ENCODE measurements at regions of chr1 and their contacts with region 1.

Region 1: DNA sequence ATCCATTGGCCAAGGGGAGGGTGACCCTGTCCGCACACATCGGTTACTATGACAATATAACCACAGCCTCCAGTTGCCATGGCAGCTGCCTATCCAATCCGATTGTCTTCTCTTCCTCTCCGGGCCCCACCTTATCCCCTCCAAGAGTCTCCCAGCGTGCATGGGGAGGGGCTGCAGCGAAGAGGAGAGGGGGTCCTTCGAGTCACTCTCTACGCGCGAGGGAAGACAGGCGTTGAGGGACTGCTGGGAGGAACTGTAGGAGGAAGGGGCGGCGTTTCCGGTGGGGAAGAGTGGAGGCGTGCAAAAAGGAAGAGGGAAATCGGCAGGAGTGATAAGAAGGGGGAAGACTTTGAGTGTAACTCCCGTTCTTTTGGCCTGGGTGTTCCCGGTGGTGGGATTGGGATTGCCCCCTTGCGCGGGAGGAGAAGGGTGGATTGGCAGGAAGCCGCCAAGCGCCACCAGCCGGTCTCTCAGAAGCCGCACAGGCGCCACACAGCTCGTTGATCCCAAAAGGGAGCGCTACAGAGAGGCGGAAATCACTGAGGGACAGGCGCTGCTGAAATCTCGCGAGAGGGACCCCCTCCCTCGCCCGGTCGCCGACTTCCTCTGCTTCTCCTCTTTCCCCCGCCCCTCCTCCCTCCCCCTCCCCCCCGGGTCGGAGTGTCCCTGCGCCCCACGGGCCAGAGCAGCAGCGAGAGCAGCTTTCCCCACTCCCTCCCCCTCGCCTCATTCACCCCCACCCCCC is 384 bp upstream of the SMG7 start:
- DNase-seq: peak; percentile 96 to 99 (median 97)
- H3K4me3 ChIP-seq: peak overlapping the region; percentile 82 to 98
- H3K4me3 Mint-ChIP-seq: peak overlapping the region; percentile 90 to 99 (median 96)
- H3K27ac ChIP-seq: peak overlapping the region; percentile 91
- H3K27ac Mint-ChIP-seq: peak overlapping the region; percentile 99 to 100 (median 100)
- H3K4me1 ChIP-seq: peaks cover 39% of the 10 kb centered on the region
- H3K4me1 Mint-ChIP-seq: peaks cover 13 to 43% (median 19%) of the 10 kb centered on the region in 4 donors
- H3K27me3 ChIP-seq: no peaks in the 10 kb centered on the region
- H3K27me3 Mint-ChIP-seq: peaks cover 0 to 3% of the 10 kb centered on the region in 2 donors

Region 2: GRCh38 chr1:182839209-182840065 is 632.5 kb before region 1 on chr1 and contains the start of gene DHX9:
- CTCF ChIA-PET with region 1: no interaction called
- POLR2A ChIA-PET with region 1: no interaction called
- intact Hi-C with region 1: loop called (anchors 2 kb)
- DNase-seq: peak; percentile 95 to 99 (median 96)
- H3K4me3 ChIP-seq: peak within 1 kb of the TSS; percentile 44 to 69
- H3K4me3 Mint-ChIP-seq: peak within 1 kb of the TSS; percentile 88 to 99 (median 96)
- H3K27ac ChIP-seq: peak within 1 kb of the TSS; percentile 81
- H3K27ac Mint-ChIP-seq: peak within 1 kb of the TSS; percentile 89 to 100 (median 98)
- H3K4me1 ChIP-seq: peaks cover 38% of the 10 kb centered on the region
- H3K4me1 Mint-ChIP-seq: peaks cover 34 to 57% (median 42%) of the 10 kb centered on the region in 4 donors
- H3K27me3 ChIP-seq: no peaks in the 10 kb centered on the region
- H3K27me3 Mint-ChIP-seq: no peaks in the 10 kb centered on the region
- total RNA-seq, gene DHX9: 222 TPM

Region 3: DNA sequence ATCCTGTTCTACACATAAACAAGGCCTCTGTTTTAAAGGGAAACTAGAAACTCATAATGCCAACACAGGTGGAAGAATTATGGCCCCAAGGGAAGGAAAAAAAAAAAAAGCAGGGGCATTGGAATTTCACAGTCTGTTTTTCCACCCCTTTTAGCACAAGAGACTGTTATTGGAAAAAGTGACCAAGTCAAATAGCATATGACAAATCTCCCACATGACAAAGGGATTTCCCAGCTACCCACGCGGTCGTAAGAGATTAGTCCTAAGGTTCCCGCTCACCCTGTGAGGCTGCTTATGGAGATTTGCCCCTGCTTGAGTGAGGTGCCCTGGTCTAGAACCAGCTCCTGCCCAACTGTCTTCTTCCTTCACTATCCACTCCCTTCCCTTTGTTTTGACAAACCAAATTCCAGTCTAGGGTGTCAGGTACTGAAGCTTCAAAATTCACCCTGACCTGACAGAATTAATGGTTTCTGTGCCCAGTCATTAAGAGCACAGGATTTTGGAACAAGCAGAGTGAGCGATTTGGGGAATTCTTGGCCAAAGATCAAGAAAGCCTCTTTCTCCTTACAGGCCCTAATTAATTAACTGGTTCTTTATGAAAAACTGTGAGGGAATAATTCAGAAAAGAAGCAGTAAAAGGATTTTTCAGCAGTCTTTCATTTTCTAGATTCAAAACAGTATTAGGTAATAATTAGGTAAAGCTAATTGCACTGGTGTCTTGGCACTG is 161.0 kb before region 1 on chr1:
- CTCF ChIA-PET with region 1: no interaction called
- POLR2A ChIA-PET with region 1: no interaction called
- intact Hi-C with region 1: no loop called
- DNase-seq: no peak
- H3K4me3 ChIP-seq: no peak overlapping the region
- H3K4me3 Mint-ChIP-seq: no peak overlapping the region
- H3K27ac ChIP-seq: no peak overlapping the region
- H3K27ac Mint-ChIP-seq: no peak overlapping the region
- H3K4me1 ChIP-seq: no peaks in the 10 kb centered on the region
- H3K4me1 Mint-ChIP-seq: no peaks in the 10 kb centered on the region
- H3K27me3 ChIP-seq: no peaks in the 10 kb centered on the region
- H3K27me3 Mint-ChIP-seq: peaks cover 3% of the 10 kb centered on the region in 2 donors

Region 4: DNA sequence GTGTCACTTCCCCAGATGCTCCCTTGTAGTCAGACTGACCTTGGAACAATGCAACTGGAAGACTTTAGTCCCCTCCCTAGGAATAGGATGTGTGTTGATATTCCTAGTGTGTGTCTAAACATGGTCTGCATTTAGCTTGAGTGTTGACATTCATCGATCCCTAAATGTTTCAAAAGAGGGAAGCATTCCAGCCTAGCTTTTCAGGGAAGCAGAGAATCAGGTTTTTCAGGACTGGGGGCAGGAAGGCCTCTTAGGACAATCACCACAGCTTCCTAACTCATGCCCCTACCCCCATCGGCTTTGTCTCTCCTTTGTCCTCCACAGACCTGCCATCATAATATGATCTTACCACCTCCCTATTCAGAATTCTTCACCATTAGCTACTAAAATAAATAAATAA is 97.1 kb before region 1 on chr1:
- CTCF ChIA-PET with region 1: no interaction called
- POLR2A ChIA-PET with region 1: no interaction called
- intact Hi-C with region 1: no loop called
- DNase-seq: no peak
- H3K4me3 ChIP-seq: no peak overlapping the region
- H3K4me3 Mint-ChIP-seq: no peak overlapping the region
- H3K27ac ChIP-seq: no peak overlapping the region
- H3K27ac Mint-ChIP-seq: no peak overlapping the region
- H3K4me1 ChIP-seq: no peaks in the 10 kb centered on the region
- H3K4me1 Mint-ChIP-seq: no peaks in the 10 kb centered on the region
- H3K27me3 ChIP-seq: no peaks in the 10 kb centered on the region
- H3K27me3 Mint-ChIP-seq: peaks cover 9 to 10% of the 10 kb centered on the region in 2 donors

Region 5: GRCh38 chr1:183543619-183544204 is 71.8 kb after region 1 on chr1:
- CTCF ChIA-PET with region 1: interaction called, 6 read pairs
- POLR2A ChIA-PET with region 1: no interaction called
- intact Hi-C with region 1: loop called (anchors 1 kb)
- DNase-seq: peak in 4 of 5 donors; percentile 36 to 47 (median 41)
- H3K4me3 ChIP-seq: no peak overlapping the region
- H3K4me3 Mint-ChIP-seq: no peak overlapping the region
- H3K27ac ChIP-seq: no peak overlapping the region
- H3K27ac Mint-ChIP-seq: peak overlapping the region in 4 of 7 donors; percentile 8 to 87 (median 28)
- H3K4me1 ChIP-seq: no peaks in the 10 kb centered on the region
- H3K4me1 Mint-ChIP-seq: peaks cover 0 to 5% (median 1%) of the 10 kb centered on the region in 4 donors
- H3K27me3 ChIP-seq: no peaks in the 10 kb centered on the region
- H3K27me3 Mint-ChIP-seq: no peaks in the 10 kb centered on the region

Region 6: DNA sequence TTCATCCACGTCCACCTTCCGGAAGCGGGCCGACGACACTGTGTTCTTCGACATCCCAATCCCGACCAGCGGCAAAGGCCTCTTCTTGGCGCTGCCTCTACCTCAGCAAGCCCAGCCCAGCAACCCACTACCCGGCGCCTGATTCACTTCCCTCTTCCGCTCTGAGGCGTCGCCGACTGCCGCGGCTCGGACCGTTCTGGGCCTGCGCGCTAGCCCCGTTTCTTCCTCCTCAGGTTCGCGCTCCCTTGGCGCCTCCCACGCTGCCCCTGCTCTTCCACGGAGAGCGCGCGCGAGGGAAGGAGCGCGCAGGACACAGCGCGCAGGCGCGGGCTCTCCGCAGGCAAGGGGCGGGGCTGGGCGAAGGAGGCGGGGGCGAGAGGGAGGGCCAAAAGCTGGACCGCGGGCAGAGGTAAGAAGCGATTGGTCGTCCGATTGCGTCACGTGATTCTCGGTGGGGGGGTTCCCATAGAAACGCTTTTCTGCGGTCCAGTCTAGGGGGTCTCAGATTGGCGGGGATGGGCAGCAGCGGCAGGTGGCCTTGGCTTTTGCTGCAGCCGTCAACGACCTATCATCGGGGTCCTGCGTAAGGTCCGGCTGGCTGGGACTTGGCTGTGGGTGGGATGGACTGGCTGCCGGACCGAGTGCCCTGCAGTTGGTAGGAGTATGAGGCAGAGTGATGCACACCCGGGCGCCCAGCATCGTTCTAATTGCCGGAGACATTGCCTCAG is 163.9 kb after region 1 on chr1 and contains the start of gene ARPC5:
- CTCF ChIA-PET with region 1: interaction called, 5 read pairs
- POLR2A ChIA-PET with region 1: interaction called, 16 read pairs
- intact Hi-C with region 1: loop called (anchors 1 kb)
- DNase-seq: peak; percentile 94 to 95 (median 94)
- H3K4me3 ChIP-seq: peak within 1 kb of the TSS; percentile 72 to 88
- H3K4me3 Mint-ChIP-seq: peak within 1 kb of the TSS; percentile 100
- H3K27ac ChIP-seq: peak within 1 kb of the TSS; percentile 81
- H3K27ac Mint-ChIP-seq: peak within 1 kb of the TSS; percentile 92 to 100 (median 99)
- H3K4me1 ChIP-seq: peaks cover 44% of the 10 kb centered on the region
- H3K4me1 Mint-ChIP-seq: peaks cover 26 to 54% (median 36%) of the 10 kb centered on the region in 4 donors
- H3K27me3 ChIP-seq: no peaks in the 10 kb centered on the region
- H3K27me3 Mint-ChIP-seq: no peaks in the 10 kb centered on the region
- total RNA-seq, gene ARPC5: 106 to 107 TPM

Region 7: DNA sequence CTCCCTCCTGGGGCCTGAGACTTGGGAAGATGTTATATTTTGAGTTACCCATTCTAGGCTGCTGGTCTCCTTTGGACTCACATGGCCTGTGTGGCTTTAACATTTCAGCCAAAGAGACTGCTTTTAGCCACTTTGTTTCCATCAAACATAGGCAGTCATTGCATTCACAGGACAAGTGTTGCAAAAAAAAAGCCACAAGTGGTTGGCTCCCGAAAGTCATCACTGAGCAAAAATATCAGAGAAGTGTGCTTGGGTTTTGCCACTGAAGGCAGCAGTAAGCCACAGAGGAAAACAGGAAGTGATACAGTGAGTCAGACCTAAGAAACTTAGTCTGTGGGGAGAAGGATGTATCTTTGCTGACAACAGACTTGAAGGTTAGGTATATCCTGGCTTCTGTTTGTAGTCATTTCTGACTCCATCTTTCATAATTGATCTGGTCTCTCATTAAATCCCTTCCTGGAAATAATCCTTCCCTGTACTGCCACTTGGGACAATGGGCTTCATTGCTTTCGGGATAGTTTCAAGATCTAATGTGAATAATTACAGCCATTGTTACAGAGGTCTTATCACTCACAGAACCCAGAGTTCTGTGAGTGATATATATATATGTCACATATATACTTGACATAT is 484.8 kb after region 1 on chr1:
- CTCF ChIA-PET with region 1: no interaction called
- POLR2A ChIA-PET with region 1: no interaction called
- intact Hi-C with region 1: loop called (anchors 5 kb)
- DNase-seq: peak; percentile 72 to 78 (median 76)
- H3K4me3 ChIP-seq: no peak overlapping the region
- H3K4me3 Mint-ChIP-seq: peak overlapping the region in 7 of 8 donors; percentile 25 to 75 (median 67)
- H3K27ac ChIP-seq: peak overlapping the region; percentile 53
- H3K27ac Mint-ChIP-seq: no peak overlapping the region
- H3K4me1 ChIP-seq: peaks cover 37% of the 10 kb centered on the region
- H3K4me1 Mint-ChIP-seq: peaks cover 6 to 15% (median 7%) of the 10 kb centered on the region in 4 donors
- H3K27me3 ChIP-seq: no peaks in the 10 kb centered on the region
- H3K27me3 Mint-ChIP-seq: no peaks in the 10 kb centered on the region

Measured in CD4-positive, alpha-beta memory T cell (primary cell).